Naive thymus-derived CD4-positive, alpha-beta T cell (primary cell): ENCODE measurements at regions of chr15 and their contacts with region 1.

Region 1: DNA sequence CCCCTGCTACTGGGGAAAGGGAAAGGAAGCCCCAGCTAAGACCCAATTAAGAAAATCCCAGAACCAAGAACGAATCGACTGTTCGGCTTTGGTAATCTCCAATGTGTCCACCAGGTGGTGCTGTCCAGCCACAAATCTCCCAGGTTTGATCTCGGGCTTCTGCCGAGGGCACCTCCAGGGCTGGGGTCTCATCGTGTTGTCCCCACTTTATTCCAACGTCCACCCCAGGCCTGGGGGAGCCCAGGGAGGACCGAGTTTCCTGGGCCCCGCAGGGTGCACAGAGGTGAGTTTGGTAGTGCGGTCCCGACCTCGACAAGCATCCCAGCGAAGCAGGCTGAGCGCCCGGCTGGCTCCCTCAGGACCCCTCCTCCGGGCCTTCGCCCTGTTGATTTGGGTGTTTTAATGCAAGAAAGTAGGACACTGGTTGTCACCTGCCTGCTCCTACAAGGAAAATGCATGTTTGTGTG is 185.1 kb downstream of the GOLGA6L6 start:
- DNase-seq: peak; percentile 61 to 92 (median 79)
- ATAC-seq: peak; percentile 69
- H3K4me3 ChIP-seq: no peak overlapping the region
- H3K4me3 Mint-ChIP-seq: peak overlapping the region in 8 of 10 donors; percentile 23 to 71 (median 38)
- H3K27ac ChIP-seq: no peak overlapping the region
- H3K27ac Mint-ChIP-seq: peak overlapping the region; percentile 18 to 92 (median 58)
- H3K4me1 ChIP-seq: peaks cover 8 to 27% of the 10 kb centered on the region in 2 donors
- H3K4me1 Mint-ChIP-seq: peaks cover 2 to 7% (median 5%) of the 10 kb centered on the region in 7 donors
- H3K27me3 ChIP-seq: no peaks in the 10 kb centered on the region
- H3K27me3 Mint-ChIP-seq: peaks cover 0 to 4% (median 0%) of the 10 kb centered on the region in 5 donors

Region 2: DNA sequence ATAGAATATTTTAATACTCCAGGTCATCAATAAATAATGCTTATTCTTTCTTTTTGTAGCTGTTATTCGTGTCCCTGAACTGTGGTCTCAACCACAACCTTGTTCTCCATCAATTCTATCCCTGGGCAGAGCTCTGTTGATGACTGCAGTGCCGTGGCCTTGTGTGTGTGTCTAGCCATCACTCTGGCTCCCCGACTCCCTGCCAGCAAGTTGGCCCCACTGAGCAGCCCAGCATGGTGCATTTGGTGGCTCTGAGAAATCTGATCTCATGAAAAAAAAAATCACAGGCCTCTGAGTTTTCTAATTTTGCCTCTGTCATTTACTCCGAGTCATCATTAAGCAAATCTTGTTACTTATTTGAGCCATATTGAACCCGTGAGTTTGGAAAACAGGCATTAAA is 20.4 kb after region 1 on chr15:
- CTCF ChIA-PET with region 1: no interaction called
- POLR2A ChIA-PET with region 1: no interaction called
- intact Hi-C with region 1: loop called in 1 of 2 experiments (anchors 2 kb)
- DNase-seq: no peak
- ATAC-seq: no peak
- H3K4me3 ChIP-seq: no peak overlapping the region
- H3K4me3 Mint-ChIP-seq: no peak overlapping the region
- H3K27ac ChIP-seq: no peak overlapping the region
- H3K27ac Mint-ChIP-seq: no peak overlapping the region
- H3K4me1 ChIP-seq: no peaks in the 10 kb centered on the region
- H3K4me1 Mint-ChIP-seq: no peaks in the 10 kb centered on the region
- H3K27me3 ChIP-seq: no peaks in the 10 kb centered on the region
- H3K27me3 Mint-ChIP-seq: no peaks in the 10 kb centered on the region

Region 3: DNA sequence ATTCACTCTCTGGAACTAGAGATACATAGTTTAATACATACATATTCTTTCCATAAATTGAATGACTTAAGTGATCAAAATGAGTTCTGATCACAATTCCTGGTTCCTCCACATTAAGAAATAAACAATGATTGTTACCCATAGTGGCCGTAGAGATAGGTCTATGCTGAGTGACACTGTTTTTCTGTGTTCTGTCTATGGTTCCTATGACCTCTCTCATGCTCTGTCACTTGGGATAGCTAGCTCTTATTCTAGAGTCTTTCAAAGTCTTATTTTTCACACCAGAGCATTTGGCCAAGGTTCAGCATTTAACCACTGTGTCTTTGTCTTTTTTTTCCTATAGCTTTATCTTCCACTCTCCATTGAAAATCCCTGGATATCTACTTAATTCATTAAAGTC is 52.8 kb after region 1 on chr15:
- CTCF ChIA-PET with region 1: no interaction called
- POLR2A ChIA-PET with region 1: no interaction called
- intact Hi-C with region 1: no loop called
- DNase-seq: no peak
- ATAC-seq: peak; percentile 14
- H3K4me3 ChIP-seq: no peak overlapping the region
- H3K4me3 Mint-ChIP-seq: no peak overlapping the region
- H3K27ac ChIP-seq: no peak overlapping the region
- H3K27ac Mint-ChIP-seq: no peak overlapping the region
- H3K4me1 ChIP-seq: no peaks in the 10 kb centered on the region
- H3K4me1 Mint-ChIP-seq: no peaks in the 10 kb centered on the region
- H3K27me3 ChIP-seq: no peaks in the 10 kb centered on the region
- H3K27me3 Mint-ChIP-seq: peaks cover 0 to 5% (median 2%) of the 10 kb centered on the region in 5 donors

Region 4: GRCh38 chr15:22224241-22224671 is 1867.8 kb after region 1 on chr15:
- CTCF ChIA-PET with region 1: interaction called, 81 read pairs
- POLR2A ChIA-PET with region 1: interaction called, 4 read pairs
- intact Hi-C with region 1: no loop called
- DNase-seq: peak in 1 of 9 donors; percentile 12
- ATAC-seq: no peak
- H3K4me3 ChIP-seq: no peak overlapping the region
- H3K4me3 Mint-ChIP-seq: peak overlapping the region in 1 of 10 donors; percentile 13
- H3K27ac ChIP-seq: no peak overlapping the region
- H3K27ac Mint-ChIP-seq: peak overlapping the region in 8 of 9 donors; percentile 4 to 88 (median 50)
- H3K4me1 ChIP-seq: peaks cover 19 to 25% of the 10 kb centered on the region in 2 donors
- H3K4me1 Mint-ChIP-seq: peaks cover 20 to 40% (median 35%) of the 10 kb centered on the region in 7 donors
- H3K27me3 ChIP-seq: no peaks in the 10 kb centered on the region
- H3K27me3 Mint-ChIP-seq: peaks cover 0 to 13% (median 0%) of the 10 kb centered on the region in 5 donors